ENCODE measurements at regions of chr7 and their contacts with region 1.

Region 1: DNA sequence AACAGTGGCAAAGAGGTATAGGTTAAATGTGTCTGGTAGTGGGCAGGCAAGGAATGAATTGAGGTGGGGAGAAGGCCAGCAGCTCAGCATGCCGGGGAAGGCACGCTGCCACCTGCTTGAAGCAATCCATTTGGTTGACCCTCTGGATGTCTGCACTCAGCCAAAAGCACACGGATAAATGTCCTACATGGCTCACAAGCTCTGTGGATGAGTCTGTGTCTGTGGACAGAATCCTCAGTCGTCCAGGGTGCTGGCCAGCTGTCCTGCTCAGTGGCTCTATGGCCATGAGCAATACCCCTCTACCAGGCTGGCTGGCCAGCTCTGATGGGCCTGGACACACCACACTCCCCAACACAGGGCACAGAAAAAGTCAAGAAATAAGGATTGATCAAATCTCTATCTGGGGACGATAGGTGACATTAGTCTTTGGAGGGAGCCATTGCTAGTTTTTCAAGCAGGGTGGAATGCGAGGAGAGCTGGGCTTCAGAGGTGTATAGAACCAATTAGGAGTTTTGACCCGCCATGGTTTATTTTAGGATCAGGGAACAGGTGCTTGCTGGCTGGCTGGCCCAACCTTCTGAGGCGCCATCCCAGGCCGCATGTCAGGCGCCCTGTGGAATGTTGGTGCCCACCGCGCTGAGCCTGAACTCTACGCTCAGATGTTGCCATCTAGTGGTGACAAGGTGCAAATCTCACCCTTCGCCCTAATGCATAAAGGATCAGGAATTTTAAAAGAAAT is 493.4 kb downstream of the TNS3 start:
- DNase-seq: peak in 1 of 3 donors; percentile 42
- ATAC-seq: peak; percentile 91 to 96 (median 96)
- H3K4me3 ChIP-seq: no peak overlapping the region
- H3K27ac ChIP-seq: no peak overlapping the region
- H3K4me1 ChIP-seq: no peaks in the 10 kb centered on the region
- H3K27me3 ChIP-seq: no peaks in the 10 kb centered on the region
- CTCF ChIP-seq: peak; percentile 80 to 91 (median 86)
- POLR2A ChIP-seq: no peak

Region 2: DNA sequence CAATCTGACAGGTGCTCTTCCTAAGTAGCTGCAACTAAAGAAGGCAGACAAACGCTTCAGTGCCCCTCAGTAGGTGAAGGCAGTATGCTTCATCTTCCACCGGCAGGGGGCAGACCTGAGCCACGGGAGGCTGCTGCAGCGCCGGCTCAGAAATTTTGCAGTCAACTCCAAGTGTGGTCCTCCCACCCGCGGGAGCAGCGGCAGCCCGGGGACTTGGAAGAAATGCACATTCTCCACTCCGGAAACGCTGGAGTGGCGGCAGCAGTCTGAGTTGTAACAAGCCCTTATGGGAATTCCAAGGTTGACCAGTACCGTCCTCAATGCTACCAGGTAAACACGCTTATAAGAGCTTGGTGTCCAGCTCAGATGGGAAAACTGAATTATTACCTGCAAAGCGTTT is 1170.8 kb before region 1 on chr7:
- intact Hi-C with region 1: loop called in 1 of 2 experiments (anchors 10 kb)
- DNase-seq: peak; percentile 78 to 84 (median 80)
- ATAC-seq: peak; percentile 63 to 79 (median 66)
- H3K4me3 ChIP-seq: peak overlapping the region in 2 of 3 donors; percentile 14 to 59
- H3K27ac ChIP-seq: peak overlapping the region in 1 of 3 donors; percentile 3
- H3K4me1 ChIP-seq: peaks cover 0 to 18% (median 6%) of the 10 kb centered on the region in 4 donors
- H3K27me3 ChIP-seq: no peaks in the 10 kb centered on the region
- CTCF ChIP-seq: peak; percentile 78 to 97 (median 97)
- POLR2A ChIP-seq: no peak

Measured in right lobe of liver (tissue), 6 donors.